Head of caudate nucleus (tissue), 42 donors: ENCODE measurements at regions of chr3 and their contacts with region 1.

Region 1: DNA sequence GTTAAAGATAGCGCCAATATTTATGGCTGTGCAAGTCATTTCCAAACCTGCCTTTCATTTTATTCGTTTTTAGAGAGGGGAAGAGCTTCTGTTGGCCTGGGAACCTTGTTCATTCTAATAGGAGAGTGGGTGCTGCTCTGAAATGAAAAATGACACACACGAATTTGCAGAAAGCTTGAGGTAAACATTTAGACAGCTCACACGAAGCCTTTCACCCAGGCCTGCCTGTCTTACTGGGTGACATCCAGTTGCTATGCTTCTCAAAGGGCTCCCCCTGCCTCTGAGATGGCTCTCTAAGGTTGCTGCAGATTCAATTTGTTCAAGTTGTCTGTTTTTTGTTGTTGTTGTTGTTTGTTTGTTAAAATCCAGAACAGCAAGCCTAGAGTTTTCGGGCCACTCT is 18.2 kb downstream of the PEX5L start:
- DNase-seq: peak; percentile 8 to 87 (median 62)

Region 2: DNA sequence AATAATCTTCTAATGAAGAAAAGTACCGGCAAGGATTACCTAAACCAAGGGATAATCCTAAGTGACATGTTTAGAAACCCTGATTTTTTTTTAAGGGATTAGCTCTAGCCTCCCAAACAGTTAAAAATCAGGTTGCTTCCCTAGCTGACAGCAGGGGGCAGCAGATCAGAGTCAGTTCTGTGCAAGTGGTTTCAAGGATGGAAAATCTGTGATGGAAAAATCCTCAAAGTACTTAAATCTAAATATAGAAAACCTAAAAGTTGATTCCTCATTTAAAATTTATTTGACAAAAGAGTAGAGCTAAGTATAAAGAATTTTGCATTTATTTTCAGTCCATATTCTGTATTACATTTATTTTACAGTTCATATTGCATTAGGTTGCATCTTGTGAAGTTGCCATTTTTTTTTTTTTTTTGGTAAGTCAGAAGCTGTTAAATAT is 89.4 kb before region 1 on chr3:
- intact Hi-C with region 1: loop called (anchors 10 kb)
- DNase-seq: peak; percentile 28 to 91 (median 78)